Natural killer cell (primary cell): ENCODE measurements at regions of chr2 and their contacts with region 1.

Region 1: DNA sequence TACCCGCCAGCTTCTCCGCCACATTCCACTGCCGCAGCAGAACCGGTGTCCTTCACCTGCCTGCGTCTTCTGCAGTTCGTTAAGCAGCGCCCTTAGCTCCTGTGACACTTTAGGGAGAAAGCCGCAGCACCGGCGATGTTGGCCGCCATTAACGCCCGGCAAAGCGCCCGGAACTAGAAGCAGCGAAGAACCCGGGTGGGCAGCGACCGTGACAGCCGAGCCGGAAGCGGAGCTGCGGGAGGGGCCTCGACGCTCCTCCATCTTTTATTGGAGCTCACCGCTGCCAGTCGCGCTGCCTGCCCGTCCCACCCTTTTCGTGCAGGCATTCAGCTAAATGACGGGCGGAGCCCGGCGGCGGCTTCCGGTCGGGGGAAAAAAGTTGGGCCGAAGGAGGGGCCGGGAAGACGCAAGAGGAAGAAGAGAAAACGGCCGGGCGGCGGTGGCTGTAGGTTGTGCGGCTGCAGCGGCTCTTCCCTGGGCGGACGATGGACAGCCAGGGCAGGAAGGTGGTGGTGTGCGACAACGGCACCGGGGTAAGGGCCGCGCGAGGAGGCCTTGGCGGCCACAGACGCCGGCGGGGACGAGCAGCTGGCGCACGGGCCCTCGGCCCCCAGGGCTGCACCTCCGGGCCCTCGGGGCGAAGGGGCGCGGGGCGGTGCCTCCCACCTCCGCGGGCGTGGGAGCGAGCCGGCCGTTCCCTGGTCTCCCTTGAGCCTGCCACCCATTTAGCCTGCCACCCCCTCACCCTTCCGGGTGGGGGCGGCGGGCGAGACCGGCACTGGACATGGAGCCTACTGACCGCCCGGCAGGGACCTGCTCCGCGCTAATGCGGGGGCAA is at the start of gene ACTR2:
- DNase-seq: peak; percentile 89 to 97
- ATAC-seq: peak; percentile 91 to 98 (median 94)
- H3K4me3 ChIP-seq: peak within 1 kb of the TSS; percentile 99
- H3K4me3 Mint-ChIP-seq: peak within 1 kb of the TSS; percentile 99
- H3K27ac ChIP-seq: peak within 1 kb of the TSS; percentile 98
- H3K27ac Mint-ChIP-seq: peak within 1 kb of the TSS; percentile 99
- H3K4me1 ChIP-seq: peaks cover 35% of the 10 kb centered on the region
- H3K4me1 Mint-ChIP-seq: peaks cover 35 to 41% of the 10 kb centered on the region in 2 donors
- H3K27me3 ChIP-seq: no peaks in the 10 kb centered on the region
- H3K27me3 Mint-ChIP-seq: no peaks in the 10 kb centered on the region
- CTCF ChIP-seq: no peak
- total RNA-seq, gene ACTR2: 346 to 404 (median 403) TPM

Region 2: DNA sequence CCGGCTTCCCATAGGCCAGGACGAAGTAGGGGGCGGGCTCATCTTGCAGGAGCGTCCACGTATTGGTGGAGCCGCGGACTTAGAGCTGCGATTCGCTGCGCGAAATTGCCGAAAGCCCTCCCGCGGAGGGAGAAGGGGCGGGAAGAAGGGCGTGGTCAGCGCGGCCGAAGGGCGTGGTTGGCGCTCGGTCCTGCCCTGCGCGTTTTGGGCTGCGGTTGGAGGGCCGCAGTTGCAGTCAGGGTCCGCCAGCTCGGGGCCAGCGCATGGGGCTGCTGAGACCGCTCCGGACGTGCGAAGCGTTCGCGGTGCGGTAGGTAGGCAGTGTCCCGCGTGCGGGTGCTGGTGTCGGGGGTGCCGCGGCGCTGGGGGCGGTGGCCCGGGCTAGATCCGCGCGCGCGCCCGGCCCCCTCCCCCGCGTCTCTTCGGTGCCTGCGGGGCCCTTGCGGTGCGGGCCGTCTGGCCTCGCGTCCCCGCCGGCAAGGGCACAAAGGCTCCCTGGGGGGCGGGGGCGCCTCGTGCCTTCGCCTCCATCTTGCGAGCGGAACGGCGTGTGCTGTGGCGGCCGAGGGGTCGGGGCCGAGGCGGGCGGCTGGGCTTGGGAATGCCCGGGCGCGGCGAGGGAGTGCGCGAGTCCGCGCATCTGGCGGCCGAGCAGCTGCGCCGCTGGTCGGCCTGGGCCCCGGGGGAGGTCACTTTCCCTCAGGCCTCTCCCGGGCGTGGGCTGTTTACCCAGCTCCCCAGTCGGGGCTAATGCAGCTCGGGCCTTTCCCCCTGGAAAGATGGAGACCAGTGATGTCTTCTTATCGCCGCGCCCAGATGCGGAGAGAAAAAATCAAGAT is 171.2 kb before region 1 on chr2 and contains the start of gene CEP68:
- intact Hi-C with region 1: loop called (anchors 2 kb)
- DNase-seq: peak; percentile 59 to 95
- ATAC-seq: peak; percentile 95 to 99 (median 95)
- H3K4me3 ChIP-seq: peak within 1 kb of the TSS; percentile 71
- H3K4me3 Mint-ChIP-seq: peak within 1 kb of the TSS; percentile 97
- H3K27ac ChIP-seq: peak within 1 kb of the TSS; percentile 68
- H3K27ac Mint-ChIP-seq: peak within 1 kb of the TSS; percentile 86 to 93
- H3K4me1 ChIP-seq: peaks cover 35% of the 10 kb centered on the region
- H3K4me1 Mint-ChIP-seq: peaks cover 30 to 36% of the 10 kb centered on the region in 2 donors
- H3K27me3 ChIP-seq: no peaks in the 10 kb centered on the region
- H3K27me3 Mint-ChIP-seq: no peaks in the 10 kb centered on the region
- CTCF ChIP-seq: no peak
- total RNA-seq, gene CEP68: 5.6 to 8.3 (median 5.8) TPM

Region 3: DNA sequence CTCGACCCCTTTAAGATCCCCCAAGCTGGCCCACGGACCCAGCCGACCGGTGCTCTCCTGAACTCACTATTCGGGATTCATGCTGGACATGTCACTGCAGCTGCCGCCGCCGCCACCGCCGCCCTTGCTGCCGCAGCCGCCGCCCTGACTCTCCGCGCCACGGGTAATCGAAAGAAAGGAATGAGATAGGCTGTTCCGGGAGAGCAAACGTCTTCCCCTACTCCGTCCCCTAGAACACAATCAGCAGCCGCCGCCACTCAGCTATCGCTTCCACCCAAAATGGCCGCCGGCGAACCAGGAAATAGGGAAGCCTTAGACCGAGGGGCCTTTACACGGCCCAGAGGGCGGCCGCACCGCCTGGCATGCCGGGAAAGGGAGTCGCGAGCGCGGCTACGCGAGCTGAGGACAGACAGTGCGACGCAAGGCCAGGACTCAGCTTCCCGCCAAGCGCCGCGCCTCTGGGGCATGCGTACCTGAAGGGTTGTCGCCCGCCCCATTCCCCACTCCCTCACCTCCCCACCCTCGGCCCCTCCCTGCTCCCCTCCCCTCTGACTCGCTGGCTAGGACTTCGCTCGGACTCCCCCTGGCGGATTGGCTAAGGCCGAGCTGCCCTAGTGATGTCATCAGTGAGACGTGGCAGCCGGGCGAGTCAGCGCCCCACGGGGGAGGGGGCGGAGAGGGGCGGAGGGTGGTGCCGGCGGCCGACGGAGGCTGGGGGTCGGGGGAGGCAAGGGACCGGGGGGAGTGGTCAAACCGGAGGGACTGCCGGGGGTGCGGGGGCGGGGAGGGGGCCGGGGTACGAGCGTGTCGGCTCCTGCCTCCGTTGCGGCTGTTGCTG is 97.6 kb before region 1 on chr2 and contains the start of gene RAB1A:
- intact Hi-C with region 1: loop called (anchors 5 kb)
- DNase-seq: peak; percentile 95 to 100
- ATAC-seq: peak; percentile 87 to 96 (median 87)
- H3K4me3 ChIP-seq: peak within 1 kb of the TSS; percentile 84
- H3K4me3 Mint-ChIP-seq: peak within 1 kb of the TSS; percentile 100
- H3K27ac ChIP-seq: peak within 1 kb of the TSS; percentile 94
- H3K27ac Mint-ChIP-seq: peak within 1 kb of the TSS; percentile 99
- H3K4me1 ChIP-seq: peaks cover 30% of the 10 kb centered on the region
- H3K4me1 Mint-ChIP-seq: peaks cover 38 to 47% of the 10 kb centered on the region in 2 donors
- H3K27me3 ChIP-seq: no peaks in the 10 kb centered on the region
- H3K27me3 Mint-ChIP-seq: no peaks in the 10 kb centered on the region
- CTCF ChIP-seq: peak; percentile 9
- total RNA-seq, gene RAB1A: 83.5 to 101 (median 93.6) TPM

Region 4: DNA sequence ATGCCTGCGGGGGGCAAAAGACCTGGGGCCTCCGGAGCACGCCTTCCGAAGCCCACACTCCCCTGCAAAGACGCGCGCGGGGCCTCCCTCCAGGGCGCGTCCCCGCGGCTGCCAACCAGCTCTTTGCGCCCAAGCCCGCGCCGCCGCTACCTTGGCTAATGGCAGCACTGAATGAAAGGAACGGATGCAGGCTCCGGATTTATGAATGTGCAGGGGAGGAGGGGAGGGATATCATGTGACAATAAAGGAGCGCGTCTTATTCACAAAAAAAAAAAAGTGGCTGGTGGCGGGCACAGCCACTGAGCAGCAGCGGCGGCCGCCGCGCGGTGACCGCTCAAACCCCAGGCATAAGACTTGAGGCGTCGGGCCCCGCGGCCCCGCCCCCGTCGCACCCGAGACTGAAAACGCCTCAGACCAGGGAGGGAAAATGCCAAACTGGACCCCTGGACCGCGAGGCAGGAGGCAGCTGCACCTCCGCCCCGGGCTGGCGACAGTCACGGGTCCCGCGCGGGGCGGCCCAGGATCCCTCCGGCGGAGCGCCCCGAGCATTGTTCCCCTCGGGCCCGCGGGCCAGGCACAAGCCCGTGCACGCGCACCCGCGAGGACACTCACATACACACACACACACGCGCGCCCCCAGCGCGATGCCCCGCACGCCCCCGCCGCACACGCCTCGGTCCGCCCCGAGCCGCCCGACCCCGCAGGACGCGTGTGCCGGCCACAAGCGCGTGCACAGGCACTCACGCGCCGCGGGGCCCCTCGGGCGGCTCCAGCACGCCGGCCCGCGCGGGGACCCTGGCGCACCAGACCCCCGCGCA is 203.2 kb after region 1 on chr2:
- intact Hi-C with region 1: loop called (anchors 1 kb)
- DNase-seq: peak; percentile 47 to 83
- ATAC-seq: peak; percentile 30 to 59 (median 56)
- H3K4me3 ChIP-seq: peak overlapping the region; percentile 75
- H3K4me3 Mint-ChIP-seq: peak overlapping the region; percentile 95
- H3K27ac ChIP-seq: no peak overlapping the region
- H3K27ac Mint-ChIP-seq: peak overlapping the region in 1 of 2 donors; percentile 92
- H3K4me1 ChIP-seq: peaks cover 25% of the 10 kb centered on the region
- H3K4me1 Mint-ChIP-seq: peaks cover 13 to 17% of the 10 kb centered on the region in 2 donors
- H3K27me3 ChIP-seq: peaks cover 13% of the 10 kb centered on the region
- H3K27me3 Mint-ChIP-seq: peaks cover 0 to 3% of the 10 kb centered on the region in 2 donors
- CTCF ChIP-seq: no peak